Caco-2 (cell line): ENCODE measurements at regions of chr11 and their contacts with region 1.

Region 1: DNA sequence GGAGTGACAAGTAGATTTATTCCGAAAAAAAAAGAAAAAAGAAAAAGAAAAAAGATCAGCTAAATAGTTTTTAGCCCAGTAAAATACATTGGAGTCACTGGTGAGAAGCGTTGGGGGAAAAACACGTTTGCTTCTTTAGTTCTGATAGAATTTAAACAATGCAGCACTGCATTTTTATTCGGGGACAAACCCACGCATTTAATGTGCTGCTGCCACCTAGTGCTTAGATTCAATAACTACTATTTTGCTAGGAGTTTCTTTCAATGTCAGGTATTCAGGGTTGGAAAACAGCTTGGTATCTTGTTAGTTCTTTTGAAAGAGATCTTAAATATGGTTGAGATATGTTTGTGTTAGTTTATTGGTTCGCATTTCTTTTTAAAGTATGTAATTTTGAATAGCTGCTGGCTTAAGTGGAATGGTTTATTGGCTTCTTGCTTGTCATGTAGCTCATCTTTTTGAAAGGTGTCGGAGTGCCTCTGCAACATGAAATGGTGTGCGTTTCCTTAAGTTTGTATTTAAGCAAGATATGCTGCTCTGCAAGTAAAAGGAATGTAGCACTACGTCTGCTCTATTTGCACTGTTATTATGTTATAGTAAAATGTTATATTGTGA is 41.9 kb downstream of the SVIP start:
- DNase-seq: peak in 1 of 2 experiments; percentile 41
- H3K4me3 ChIP-seq: no peak overlapping the region
- H3K4me3 Mint-ChIP-seq: no peak overlapping the region
- H3K27ac Mint-ChIP-seq: no peak overlapping the region
- H3K4me1 ChIP-seq: no peaks in the 10 kb centered on the region
- H3K4me1 Mint-ChIP-seq: peaks cover 3% of the 10 kb centered on the region
- H3K27me3 ChIP-seq: no peaks in the 10 kb centered on the region
- H3K27me3 Mint-ChIP-seq: no peaks in the 10 kb centered on the region
- CTCF ChIP-seq: peak; percentile 65 to 79

Region 2: DNA sequence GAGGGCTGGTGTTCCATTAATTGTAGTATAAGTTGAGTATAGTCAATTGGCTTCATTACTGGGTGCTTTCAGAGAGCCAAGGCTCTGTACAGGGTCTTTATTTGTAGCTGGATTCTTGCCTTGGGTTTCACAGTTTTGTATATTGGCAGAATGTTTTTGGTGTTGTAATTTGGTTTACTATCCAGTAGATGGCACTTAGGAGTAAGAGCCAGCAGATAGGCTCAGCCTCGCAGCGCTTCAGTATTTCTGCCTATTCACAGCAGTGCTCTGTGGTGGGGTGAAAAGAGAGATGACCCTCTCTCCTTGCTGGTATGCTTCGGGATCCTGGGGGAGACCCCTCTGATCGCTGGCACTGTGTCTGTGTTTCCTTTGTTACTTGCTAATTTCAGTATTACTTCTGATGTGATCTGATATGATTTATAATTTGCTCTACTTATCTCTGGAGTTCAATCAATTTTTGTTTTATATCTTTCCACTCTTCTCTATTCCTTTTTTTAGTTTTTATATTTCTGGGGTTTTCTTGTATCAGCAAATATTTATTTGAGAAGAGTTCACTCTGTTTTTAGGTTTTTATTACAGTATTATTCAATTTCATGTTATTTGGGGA is 542.6 kb before region 1 on chr11:
- CTCF ChIA-PET with region 1: interaction called, 4 read pairs
- POLR2A ChIA-PET with region 1: no interaction called
- intact Hi-C with region 1: loop called (anchors 2 kb)
- DNase-seq: peak; percentile 31 to 41
- H3K4me3 ChIP-seq: no peak overlapping the region
- H3K4me3 Mint-ChIP-seq: no peak overlapping the region
- H3K27ac Mint-ChIP-seq: no peak overlapping the region
- H3K4me1 ChIP-seq: no peaks in the 10 kb centered on the region
- H3K4me1 Mint-ChIP-seq: no peaks in the 10 kb centered on the region
- H3K27me3 ChIP-seq: no peaks in the 10 kb centered on the region
- H3K27me3 Mint-ChIP-seq: peaks cover 12% of the 10 kb centered on the region
- CTCF ChIP-seq: peak; percentile 53 to 77

Region 3: GRCh38 chr11:22359295-22359694 is 428.4 kb before region 1 on chr11:
- CTCF ChIA-PET with region 1: interaction called, 11 read pairs
- POLR2A ChIA-PET with region 1: no interaction called
- intact Hi-C with region 1: no loop called
- DNase-seq: no peak
- H3K4me3 ChIP-seq: no peak overlapping the region
- H3K4me3 Mint-ChIP-seq: no peak overlapping the region
- H3K27ac Mint-ChIP-seq: no peak overlapping the region
- H3K4me1 ChIP-seq: no peaks in the 10 kb centered on the region
- H3K4me1 Mint-ChIP-seq: no peaks in the 10 kb centered on the region
- H3K27me3 ChIP-seq: no peaks in the 10 kb centered on the region
- H3K27me3 Mint-ChIP-seq: peaks cover 3% of the 10 kb centered on the region
- CTCF ChIP-seq: no peak

Region 4: DNA sequence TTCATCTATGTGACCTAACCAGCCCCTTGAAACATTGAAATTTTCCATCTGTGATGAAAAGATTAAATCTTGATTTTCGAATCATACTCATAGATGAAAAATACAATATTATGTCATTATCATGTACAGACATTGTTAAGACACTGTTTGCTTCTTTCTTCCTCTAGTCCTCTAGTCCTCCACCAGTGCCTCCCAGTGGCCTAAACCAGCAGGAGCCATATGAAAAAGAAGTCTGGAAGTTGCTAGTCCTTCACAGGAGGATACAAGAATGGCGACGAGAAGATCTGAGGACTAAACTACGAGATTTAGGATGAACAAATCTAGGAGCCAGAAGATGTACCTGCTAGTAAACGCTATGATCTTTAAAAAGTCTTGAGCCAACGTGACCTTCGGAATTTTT is 315.4 kb before region 1 on chr11:
- CTCF ChIA-PET with region 1: no interaction called
- POLR2A ChIA-PET with region 1: no interaction called
- intact Hi-C with region 1: loop called (anchors 5 kb)
- DNase-seq: no peak
- H3K4me3 ChIP-seq: no peak overlapping the region
- H3K4me3 Mint-ChIP-seq: no peak overlapping the region
- H3K27ac Mint-ChIP-seq: no peak overlapping the region
- H3K4me1 ChIP-seq: no peaks in the 10 kb centered on the region
- H3K4me1 Mint-ChIP-seq: peaks cover 4% of the 10 kb centered on the region
- H3K27me3 ChIP-seq: no peaks in the 10 kb centered on the region
- H3K27me3 Mint-ChIP-seq: no peaks in the 10 kb centered on the region
- CTCF ChIP-seq: peak in 1 of 2 experiments; percentile 19

Region 5: DNA sequence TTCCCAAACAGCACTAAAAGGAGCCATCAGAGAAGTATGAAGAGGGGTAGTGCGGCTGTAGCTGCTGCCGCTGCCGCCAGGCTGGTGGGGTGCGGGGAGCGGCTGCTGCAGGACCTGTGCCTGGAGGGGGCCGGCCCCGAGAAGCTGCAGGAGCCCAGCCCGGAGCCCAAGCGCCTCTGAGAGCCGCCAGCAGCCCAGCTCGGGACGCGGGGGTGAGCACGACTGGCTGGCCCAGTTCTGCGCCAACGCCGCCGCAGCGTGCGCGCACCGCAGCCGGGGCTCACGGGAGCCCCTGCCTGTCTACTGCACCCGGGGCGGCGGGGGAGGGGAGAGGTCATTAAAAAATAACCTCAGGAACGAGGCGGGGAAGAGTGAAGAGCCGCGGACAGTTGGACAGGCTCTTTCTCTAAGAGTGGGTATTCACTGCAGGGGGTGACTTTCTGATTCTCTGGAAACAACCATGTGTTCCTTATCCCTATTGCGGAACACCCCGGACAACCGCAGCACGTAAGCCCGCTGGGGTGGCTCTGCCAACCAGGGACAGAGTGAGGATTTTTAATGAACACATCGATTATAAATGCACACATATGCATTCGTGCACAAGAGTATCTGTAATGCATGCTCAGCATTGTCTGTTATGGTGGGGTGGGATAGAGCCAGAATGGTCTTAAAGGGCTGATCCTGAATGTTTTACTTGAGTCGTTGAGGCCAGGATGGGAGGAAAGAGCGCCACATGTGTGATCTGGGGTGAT is 120.8 kb before region 1 on chr11:
- CTCF ChIA-PET with region 1: interaction called, 12 read pairs
- POLR2A ChIA-PET with region 1: no interaction called
- intact Hi-C with region 1: loop called (anchors 1 kb)
- DNase-seq: peak; percentile 63 to 73
- H3K4me3 ChIP-seq: peak overlapping the region; percentile 63
- H3K4me3 Mint-ChIP-seq: peak overlapping the region; percentile 87
- H3K27ac Mint-ChIP-seq: peak overlapping the region; percentile 58
- H3K4me1 ChIP-seq: no peaks in the 10 kb centered on the region; the same call in 1 of the 2 replicates
- H3K4me1 Mint-ChIP-seq: peaks cover 12% of the 10 kb centered on the region
- H3K27me3 ChIP-seq: no peaks in the 10 kb centered on the region
- H3K27me3 Mint-ChIP-seq: no peaks in the 10 kb centered on the region
- CTCF ChIP-seq: no peak

Region 6: DNA sequence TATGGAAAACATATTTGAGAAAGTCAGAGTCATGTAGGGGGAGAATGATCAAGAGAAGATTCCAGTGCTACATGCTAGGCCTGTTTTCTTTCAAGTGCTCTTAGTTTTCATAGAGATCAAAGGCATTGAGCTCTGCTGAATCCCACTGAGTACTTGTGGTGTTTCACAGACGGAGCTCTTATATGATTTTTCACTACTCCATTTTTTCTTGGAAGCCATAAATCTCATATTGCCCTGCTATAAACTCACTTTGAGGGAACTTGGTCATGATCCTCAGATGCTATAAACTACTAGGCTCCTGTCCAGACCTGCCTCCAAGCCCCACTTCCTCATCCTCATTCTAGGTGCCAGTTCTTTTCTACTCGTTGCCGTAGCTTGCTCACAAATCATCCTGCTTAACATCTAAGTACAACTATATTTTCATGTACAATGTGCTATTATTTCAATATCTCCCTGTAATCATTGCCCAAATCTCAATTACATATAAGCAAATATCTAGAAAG is 253.4 kb after region 1 on chr11:
- CTCF ChIA-PET with region 1: no interaction called
- POLR2A ChIA-PET with region 1: no interaction called
- intact Hi-C with region 1: no loop called
- DNase-seq: no peak
- H3K4me3 ChIP-seq: no peak overlapping the region
- H3K4me3 Mint-ChIP-seq: no peak overlapping the region
- H3K27ac Mint-ChIP-seq: no peak overlapping the region
- H3K4me1 ChIP-seq: no peaks in the 10 kb centered on the region
- H3K4me1 Mint-ChIP-seq: no peaks in the 10 kb centered on the region
- H3K27me3 ChIP-seq: no peaks in the 10 kb centered on the region
- H3K27me3 Mint-ChIP-seq: no peaks in the 10 kb centered on the region
- CTCF ChIP-seq: no peak